Naive thymus-derived CD4-positive, alpha-beta T cell (primary cell): ENCODE measurements at regions of chr2 and their contacts with region 1.

Region 1: DNA sequence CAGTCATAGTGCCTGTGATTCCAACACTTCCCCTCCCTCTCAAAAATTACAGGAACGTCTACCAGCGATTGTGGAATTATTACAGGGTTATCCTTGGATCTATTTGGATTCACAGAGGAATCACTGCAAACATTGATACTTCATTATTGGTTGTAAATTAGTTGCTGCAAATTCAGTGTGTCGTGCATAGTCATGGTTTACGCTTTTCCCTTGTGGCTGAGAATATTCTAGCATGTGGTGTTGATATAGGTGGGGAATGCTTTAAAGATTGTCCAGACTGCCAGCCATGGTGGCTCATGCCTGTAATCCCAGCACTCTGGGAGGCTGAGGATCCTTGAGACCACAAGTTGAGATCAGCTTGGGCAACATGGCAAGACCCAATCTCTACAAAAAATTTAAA is 48.7 kb upstream of the PDK1 start:
- DNase-seq: no peak
- ATAC-seq: no peak
- H3K4me3 ChIP-seq: no peak overlapping the region
- H3K4me3 Mint-ChIP-seq: no peak overlapping the region
- H3K27ac ChIP-seq: no peak overlapping the region
- H3K27ac Mint-ChIP-seq: peak overlapping the region in 7 of 9 donors; percentile 56 to 92 (median 76)
- H3K4me1 ChIP-seq: peaks cover 0 to 20% of the 10 kb centered on the region in 2 donors
- H3K4me1 Mint-ChIP-seq: peaks cover 11 to 86% (median 81%) of the 10 kb centered on the region in 7 donors
- H3K27me3 ChIP-seq: no peaks in the 10 kb centered on the region
- H3K27me3 Mint-ChIP-seq: no peaks in the 10 kb centered on the region

Region 2: DNA sequence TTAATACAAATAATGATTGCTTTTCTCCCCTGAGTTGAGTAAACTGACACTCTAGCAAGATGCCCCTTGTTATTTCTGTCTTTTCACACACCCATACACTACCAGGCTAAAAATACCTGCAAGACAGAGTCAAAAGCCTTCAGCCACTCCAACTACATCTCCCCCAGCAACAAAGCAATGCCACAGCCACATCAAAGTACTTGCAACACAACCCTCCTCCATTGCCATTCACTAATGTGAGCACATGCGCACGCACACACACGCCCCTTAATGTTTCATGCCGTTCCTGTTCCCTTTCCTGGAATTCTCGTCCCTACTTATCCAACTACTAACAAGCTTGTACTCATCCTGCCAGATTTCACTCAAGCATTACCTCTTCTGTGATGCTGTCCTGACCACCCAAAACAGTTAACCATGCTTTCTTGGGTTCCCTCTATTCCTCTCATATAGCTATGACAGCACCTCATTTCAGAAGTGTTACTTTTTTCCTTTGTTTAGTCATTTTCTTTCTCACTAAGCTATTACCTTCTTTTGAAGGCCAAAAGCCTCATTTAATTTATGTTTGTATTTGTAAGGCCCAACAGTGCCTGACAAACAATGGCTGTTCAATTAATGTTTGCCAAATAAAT is 642.7 kb before region 1 on chr2:
- CTCF ChIA-PET with region 1: no interaction called
- POLR2A ChIA-PET with region 1: no interaction called
- intact Hi-C with region 1: no loop called
- DNase-seq: peak in 2 of 9 donors; percentile 5 to 17
- ATAC-seq: no peak
- H3K4me3 ChIP-seq: no peak overlapping the region
- H3K4me3 Mint-ChIP-seq: peak overlapping the region in 1 of 10 donors; percentile 1
- H3K27ac ChIP-seq: no peak overlapping the region
- H3K27ac Mint-ChIP-seq: peak overlapping the region in 2 of 9 donors; percentile 0 to 38
- H3K4me1 ChIP-seq: peaks cover 0 to 6% of the 10 kb centered on the region in 2 donors
- H3K4me1 Mint-ChIP-seq: peaks cover 7 to 15% (median 10%) of the 10 kb centered on the region in 7 donors
- H3K27me3 ChIP-seq: no peaks in the 10 kb centered on the region
- H3K27me3 Mint-ChIP-seq: no peaks in the 10 kb centered on the region

Region 3: GRCh38 chr2:172380436-172381274 is 126.5 kb before region 1 on chr2:
- CTCF ChIA-PET with region 1: no interaction called
- POLR2A ChIA-PET with region 1: no interaction called
- intact Hi-C with region 1: no loop called
- DNase-seq: no peak
- ATAC-seq: peak; percentile 75
- H3K4me3 ChIP-seq: no peak overlapping the region
- H3K4me3 Mint-ChIP-seq: no peak overlapping the region
- H3K27ac ChIP-seq: no peak overlapping the region
- H3K27ac Mint-ChIP-seq: no peak overlapping the region
- H3K4me1 ChIP-seq: no peaks in the 10 kb centered on the region
- H3K4me1 Mint-ChIP-seq: peaks cover 0 to 7% (median 0%) of the 10 kb centered on the region in 7 donors
- H3K27me3 ChIP-seq: no peaks in the 10 kb centered on the region
- H3K27me3 Mint-ChIP-seq: no peaks in the 10 kb centered on the region

Region 4: GRCh38 chr2:172397148-172397834 is 109.9 kb before region 1 on chr2:
- CTCF ChIA-PET with region 1: no interaction called
- POLR2A ChIA-PET with region 1: no interaction called
- intact Hi-C with region 1: no loop called
- DNase-seq: no peak
- ATAC-seq: no peak
- H3K4me3 ChIP-seq: no peak overlapping the region
- H3K4me3 Mint-ChIP-seq: no peak overlapping the region
- H3K27ac ChIP-seq: no peak overlapping the region
- H3K27ac Mint-ChIP-seq: no peak overlapping the region
- H3K4me1 ChIP-seq: no peaks in the 10 kb centered on the region
- H3K4me1 Mint-ChIP-seq: peaks cover 0 to 12% (median 0%) of the 10 kb centered on the region in 7 donors
- H3K27me3 ChIP-seq: no peaks in the 10 kb centered on the region
- H3K27me3 Mint-ChIP-seq: peaks cover 0 to 13% (median 0%) of the 10 kb centered on the region in 5 donors

Region 5: GRCh38 chr2:172525606-172526005 is 18.4 kb after region 1 on chr2:
- CTCF ChIA-PET with region 1: no interaction called
- POLR2A ChIA-PET with region 1: no interaction called
- intact Hi-C with region 1: loop called in 1 of 2 experiments (anchors 2 kb)
- DNase-seq: no peak
- ATAC-seq: no peak
- H3K4me3 ChIP-seq: no peak overlapping the region
- H3K4me3 Mint-ChIP-seq: no peak overlapping the region
- H3K27ac ChIP-seq: no peak overlapping the region
- H3K27ac Mint-ChIP-seq: peak overlapping the region in 1 of 9 donors; percentile 38
- H3K4me1 ChIP-seq: no peaks in the 10 kb centered on the region
- H3K4me1 Mint-ChIP-seq: peaks cover 0 to 2% (median 0%) of the 10 kb centered on the region in 7 donors
- H3K27me3 ChIP-seq: no peaks in the 10 kb centered on the region
- H3K27me3 Mint-ChIP-seq: no peaks in the 10 kb centered on the region

Region 6: DNA sequence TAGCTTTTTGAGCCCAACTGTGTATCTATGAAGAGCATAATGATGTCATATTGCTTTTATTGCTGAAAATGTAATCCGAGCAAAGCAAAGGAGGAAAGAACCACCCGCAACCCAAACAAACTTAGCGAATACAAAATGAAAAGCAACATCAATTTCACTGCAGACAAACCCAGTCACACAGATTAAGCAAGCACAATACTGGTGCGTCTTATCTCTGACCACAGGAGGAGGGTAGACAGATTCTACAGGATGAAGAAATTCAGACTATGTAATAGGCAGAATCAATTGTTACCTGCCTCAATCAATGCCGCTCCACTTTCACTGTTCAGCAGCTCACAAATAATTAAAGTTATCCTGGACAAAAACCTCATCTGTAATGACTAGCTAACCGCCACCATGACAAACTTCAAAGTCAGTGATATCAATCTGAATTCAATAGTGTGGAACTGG is 1573.5 kb after region 1 on chr2:
- CTCF ChIA-PET with region 1: no interaction called
- POLR2A ChIA-PET with region 1: no interaction called
- intact Hi-C with region 1: no loop called
- DNase-seq: no peak
- ATAC-seq: no peak
- H3K4me3 ChIP-seq: no peak overlapping the region
- H3K4me3 Mint-ChIP-seq: no peak overlapping the region
- H3K27ac ChIP-seq: no peak overlapping the region
- H3K27ac Mint-ChIP-seq: no peak overlapping the region
- H3K4me1 ChIP-seq: no peaks in the 10 kb centered on the region
- H3K4me1 Mint-ChIP-seq: no peaks in the 10 kb centered on the region
- H3K27me3 ChIP-seq: no peaks in the 10 kb centered on the region
- H3K27me3 Mint-ChIP-seq: no peaks in the 10 kb centered on the region